Mammary epithelial cell (primary cell): ENCODE measurements at regions of chr4 and their contacts with region 1.

Region 1: DNA sequence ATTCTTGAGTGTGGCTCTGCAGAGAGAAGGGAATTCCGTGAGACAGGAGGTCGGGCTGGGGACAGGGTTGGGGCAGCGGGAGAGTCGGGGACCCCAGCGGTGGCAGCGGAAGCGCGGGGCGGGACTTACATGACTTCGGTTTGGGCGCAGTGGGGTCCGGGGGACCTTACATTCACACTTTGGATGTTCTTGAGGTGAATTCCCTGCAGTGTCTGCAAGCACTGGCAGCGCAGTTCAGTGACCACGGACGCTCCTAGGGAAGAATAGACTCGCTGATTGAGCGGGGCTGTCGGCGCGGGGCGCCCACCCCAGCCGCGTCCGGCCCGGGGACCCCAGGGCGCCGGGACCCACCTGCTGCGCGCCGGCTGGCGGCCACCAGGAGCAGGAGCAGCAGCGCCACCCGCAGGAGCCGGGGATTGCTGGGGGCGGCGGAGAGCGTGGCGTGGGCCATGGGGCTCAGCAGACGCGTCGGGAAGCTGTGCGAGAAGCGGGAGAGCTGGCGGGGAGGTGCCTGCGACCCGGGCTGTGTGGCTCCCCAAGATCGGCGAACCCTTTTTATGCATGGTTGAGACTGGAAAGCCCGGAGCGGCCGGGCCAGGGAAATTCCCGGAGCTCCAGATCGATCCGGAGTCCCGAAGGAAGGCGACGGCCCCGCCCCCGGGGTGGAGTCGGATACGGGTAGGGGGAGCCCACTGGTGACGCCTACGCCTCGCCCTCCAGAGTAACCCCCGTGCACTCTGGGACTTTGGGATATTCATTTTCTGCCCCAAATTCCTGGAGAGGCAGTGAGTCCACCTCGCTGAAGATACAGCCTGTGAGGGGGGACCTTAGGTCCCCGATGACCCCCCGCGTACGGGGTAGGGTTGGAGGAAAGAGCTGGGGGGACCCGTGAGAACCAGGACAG is at the start of gene CXCL3:
- DNase-seq: peak; percentile 94
- H3K4me3 ChIP-seq: peak within 1 kb of the TSS; percentile 73 to 82 (median 77)
- H3K27ac ChIP-seq: peak within 1 kb of the TSS; percentile 86
- H3K4me1 ChIP-seq: peaks cover 18% of the 10 kb centered on the region
- H3K27me3 ChIP-seq: no peaks in the 10 kb centered on the region
- CTCF ChIP-seq: peak; percentile 2 to 30
- total RNA-seq, gene CXCL3: 1.3 to 29.4 TPM

Region 2: DNA sequence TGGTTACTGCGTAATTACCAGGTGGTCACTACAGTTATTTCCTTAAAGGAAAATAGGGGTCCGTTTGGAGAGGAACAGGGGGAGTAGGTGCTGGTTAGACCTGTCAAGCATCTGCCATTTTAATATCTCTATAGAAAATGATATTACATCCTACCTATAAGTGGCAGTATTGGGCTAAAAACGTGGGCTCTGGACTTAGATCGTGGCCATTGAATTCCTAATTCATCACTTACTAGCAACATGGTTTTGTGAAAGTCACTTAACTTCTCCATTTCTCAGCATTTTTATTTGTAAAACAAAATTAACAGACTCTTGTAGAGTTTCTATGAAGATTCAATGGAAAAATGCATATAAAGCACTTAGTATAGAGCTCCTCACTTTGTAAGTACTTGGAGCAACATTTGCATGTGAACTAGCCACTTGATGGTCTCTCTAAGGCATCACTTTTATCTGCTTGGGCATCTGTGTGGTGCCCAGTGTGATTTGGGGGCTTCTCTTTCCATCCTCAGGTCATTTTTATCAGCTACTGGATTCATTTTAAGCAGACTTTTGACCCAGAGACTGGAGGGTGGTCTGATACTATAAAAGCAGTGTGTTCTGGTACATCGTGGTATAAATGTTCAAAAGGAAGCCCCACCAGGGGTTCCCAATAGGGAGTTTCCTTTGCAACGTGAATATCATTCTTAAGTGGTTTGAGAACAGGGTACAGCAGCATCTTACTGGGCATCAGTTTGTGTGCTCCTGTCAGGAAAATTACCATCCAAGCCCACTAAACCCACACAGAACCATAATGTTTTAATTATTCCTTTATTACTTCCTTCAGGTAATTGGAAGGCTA is 375.5 kb before region 1 on chr4:
- CTCF ChIA-PET with region 1: no interaction called
- dilution Hi-C with region 1: no loop called
- in situ Hi-C with region 1: loop called in 1 of 2 experiments (anchors 10 kb)
- intact Hi-C with region 1: loop called (anchors 2 kb)
- DNase-seq: peak; percentile 64
- H3K4me3 ChIP-seq: no peak overlapping the region
- H3K27ac ChIP-seq: peak overlapping the region; percentile 74
- H3K4me1 ChIP-seq: peaks cover 19% of the 10 kb centered on the region
- H3K27me3 ChIP-seq: no peaks in the 10 kb centered on the region
- CTCF ChIP-seq: peak; percentile 48 to 59

Region 3: DNA sequence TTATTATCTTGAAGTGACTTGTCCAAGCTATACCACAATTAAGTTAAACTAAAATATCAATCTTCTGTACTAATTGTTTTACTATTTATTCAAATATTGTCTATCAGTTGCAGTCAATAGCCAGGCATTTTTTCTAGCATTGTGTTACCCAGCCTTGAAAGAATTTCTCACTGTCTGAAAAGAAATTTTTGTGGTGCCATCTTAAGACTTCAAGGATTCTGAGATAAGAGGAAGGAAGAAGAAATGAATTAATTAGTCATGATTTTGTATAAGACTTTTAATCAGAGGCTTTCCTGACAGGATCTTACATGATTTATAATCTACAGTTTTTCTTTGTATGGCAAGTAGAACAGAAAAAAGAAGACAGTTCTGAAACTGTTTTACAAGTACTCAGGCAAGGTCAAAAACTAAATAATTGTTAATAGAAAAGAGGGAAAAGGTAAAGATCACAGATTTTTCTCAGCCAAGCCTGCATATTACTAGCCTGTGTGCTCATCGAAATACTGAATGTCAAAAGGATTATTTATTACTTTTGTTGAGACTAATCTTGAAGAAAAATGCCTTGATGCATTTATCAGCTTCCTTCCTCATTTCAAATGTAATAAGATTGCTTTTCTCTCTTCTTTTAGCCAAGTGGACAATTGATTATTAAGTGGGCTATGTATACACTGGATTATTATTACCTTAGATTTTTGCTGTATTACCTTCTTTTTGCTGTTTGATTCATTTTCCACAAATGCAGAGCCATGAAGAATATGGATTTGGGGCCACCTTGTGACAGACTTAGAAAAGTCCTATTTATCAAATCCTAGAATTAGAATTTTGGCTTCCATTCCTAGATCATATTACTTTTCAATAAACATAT is 115.4 kb before region 1 on chr4:
- CTCF ChIA-PET with region 1: no interaction called
- dilution Hi-C with region 1: no loop called
- in situ Hi-C with region 1: no loop called
- intact Hi-C with region 1: loop called (anchors 1 kb)
- DNase-seq: peak; percentile 33
- H3K4me3 ChIP-seq: no peak overlapping the region
- H3K27ac ChIP-seq: peak overlapping the region; percentile 3
- H3K4me1 ChIP-seq: peaks cover 10% of the 10 kb centered on the region
- H3K27me3 ChIP-seq: no peaks in the 10 kb centered on the region
- CTCF ChIP-seq: peak; percentile 35 to 53

Region 4: GRCh38 chr4:74005528-74005927 is 32.9 kb before region 1 on chr4:
- CTCF ChIA-PET with region 1: interaction called, 3 read pairs
- dilution Hi-C with region 1: no loop called
- in situ Hi-C with region 1: no loop called
- intact Hi-C with region 1: loop called (anchors 1 kb)
- DNase-seq: peak; percentile 97
- H3K4me3 ChIP-seq: no peak overlapping the region
- H3K27ac ChIP-seq: peak overlapping the region; percentile 100
- H3K4me1 ChIP-seq: peaks cover 21% of the 10 kb centered on the region
- H3K27me3 ChIP-seq: no peaks in the 10 kb centered on the region
- CTCF ChIP-seq: no peak

Region 5: GRCh38 chr4:74117024-74117534 is 78.7 kb after region 1 on chr4:
- CTCF ChIA-PET with region 1: no interaction called
- dilution Hi-C with region 1: no loop called
- in situ Hi-C with region 1: no loop called
- intact Hi-C with region 1: loop called (anchors 2 kb)
- DNase-seq: peak; percentile 95
- H3K4me3 ChIP-seq: peak overlapping the region in 2 of 3 experiments; percentile 27 to 63
- H3K27ac ChIP-seq: peak overlapping the region; percentile 99
- H3K4me1 ChIP-seq: peaks cover 43% of the 10 kb centered on the region
- H3K27me3 ChIP-seq: no peaks in the 10 kb centered on the region
- CTCF ChIP-seq: no peak